Heart left ventricle (tissue), 16 donors: ENCODE measurements at regions of chr7 and their contacts with region 1.

Region 1: GRCh38 chr7:123979876-123980275 is 53.0 kb downstream of the TMEM229A start:
- DNase-seq: no peak
- ATAC-seq: no peak
- H3K4me3 ChIP-seq: no peak overlapping the region
- H3K27ac ChIP-seq: no peak overlapping the region
- H3K4me1 ChIP-seq: no peaks in the 10 kb centered on the region
- H3K27me3 ChIP-seq: no peaks in the 10 kb centered on the region
- CTCF ChIP-seq: no peak
- POLR2A ChIP-seq: no peak

Region 2: GRCh38 chr7:123319911-123320310 is 660.0 kb before region 1 on chr7:
- intact Hi-C with region 1: no loop called
- DNase-seq: no peak
- ATAC-seq: no peak
- H3K4me3 ChIP-seq: no peak overlapping the region
- H3K27ac ChIP-seq: no peak overlapping the region
- H3K4me1 ChIP-seq: no peaks in the 10 kb centered on the region
- H3K27me3 ChIP-seq: no peaks in the 10 kb centered on the region
- CTCF ChIP-seq: no peak
- POLR2A ChIP-seq: no peak

Region 3: GRCh38 chr7:124246262-124246863 is 266.5 kb after region 1 on chr7:
- intact Hi-C with region 1: loop called in 1 of 10 experiments (anchors 10 kb)
- DNase-seq: no peak
- ATAC-seq: no peak
- H3K4me3 ChIP-seq: no peak overlapping the region
- H3K27ac ChIP-seq: no peak overlapping the region
- H3K4me1 ChIP-seq: no peaks in the 10 kb centered on the region
- H3K27me3 ChIP-seq: no peaks in the 10 kb centered on the region
- CTCF ChIP-seq: no peak
- POLR2A ChIP-seq: no peak